ENCODE measurements at regions of chr2 and their contacts with region 1.

Region 1: DNA sequence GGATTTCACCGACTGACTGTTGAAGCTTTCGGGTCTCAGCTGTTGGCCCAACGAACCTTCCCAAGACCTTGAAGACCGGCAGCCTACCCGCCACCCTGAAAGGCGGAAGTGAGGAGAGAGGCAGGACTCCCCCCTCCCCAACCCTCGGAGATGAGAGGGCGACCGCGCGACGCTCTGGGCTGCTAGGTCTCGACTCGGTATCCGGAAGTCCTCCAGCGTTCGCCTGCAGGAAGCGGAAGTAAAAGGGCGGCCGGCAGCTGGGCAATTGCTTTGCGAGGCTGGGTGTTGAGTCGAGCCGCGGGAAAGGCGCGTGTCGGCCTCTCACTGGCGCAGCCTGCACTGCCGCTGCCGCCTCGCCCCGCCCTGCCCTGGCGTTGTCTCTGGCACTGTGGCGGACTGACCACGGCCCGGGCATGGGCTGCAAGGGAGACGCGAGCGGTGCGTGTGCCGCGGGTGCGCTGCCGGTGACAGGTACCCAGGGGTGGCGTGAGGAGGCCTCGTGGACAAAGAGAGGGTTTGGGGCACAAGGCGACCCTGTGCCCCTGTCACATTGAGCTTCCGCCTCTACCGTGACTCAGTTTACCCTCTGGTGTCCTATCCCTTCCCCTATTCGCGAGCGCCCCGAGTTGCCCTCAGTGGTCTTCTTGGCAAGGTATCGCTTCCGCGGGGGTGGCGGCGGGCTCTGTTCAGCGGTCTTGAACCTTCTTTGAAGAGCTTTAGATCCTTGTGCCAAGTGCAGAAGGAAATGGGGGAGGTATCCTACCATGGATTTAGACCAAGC is at the start of gene UGGT1:
- DNase-seq: peak; percentile 96 to 97
- H3K4me3 ChIP-seq: peak within 1 kb of the TSS; percentile 64
- H3K4me3 Mint-ChIP-seq: peak within 1 kb of the TSS; percentile 84
- H3K27ac Mint-ChIP-seq: peak within 1 kb of the TSS; percentile 91
- H3K4me1 ChIP-seq: no peaks in the 10 kb centered on the region
- H3K4me1 Mint-ChIP-seq: no peaks in the 10 kb centered on the region
- H3K27me3 ChIP-seq: no peaks in the 10 kb centered on the region
- H3K27me3 Mint-ChIP-seq: no peaks in the 10 kb centered on the region
- CTCF ChIP-seq: no peak
- total RNA-seq, gene UGGT1: 77.5 and 80.0 TPM in 2 replicates

Region 2: GRCh38 chr2:127844973-127845372 is 246.2 kb before region 1 on chr2:
- CTCF ChIA-PET with region 1: no interaction called
- POLR2A ChIA-PET with region 1: no interaction called
- intact Hi-C with region 1: no loop called
- DNase-seq: no peak
- H3K4me3 ChIP-seq: no peak overlapping the region
- H3K4me3 Mint-ChIP-seq: no peak overlapping the region
- H3K27ac Mint-ChIP-seq: no peak overlapping the region
- H3K4me1 ChIP-seq: no peaks in the 10 kb centered on the region
- H3K4me1 Mint-ChIP-seq: no peaks in the 10 kb centered on the region
- H3K27me3 ChIP-seq: no peaks in the 10 kb centered on the region
- H3K27me3 Mint-ChIP-seq: no peaks in the 10 kb centered on the region
- CTCF ChIP-seq: no peak

Region 3: DNA sequence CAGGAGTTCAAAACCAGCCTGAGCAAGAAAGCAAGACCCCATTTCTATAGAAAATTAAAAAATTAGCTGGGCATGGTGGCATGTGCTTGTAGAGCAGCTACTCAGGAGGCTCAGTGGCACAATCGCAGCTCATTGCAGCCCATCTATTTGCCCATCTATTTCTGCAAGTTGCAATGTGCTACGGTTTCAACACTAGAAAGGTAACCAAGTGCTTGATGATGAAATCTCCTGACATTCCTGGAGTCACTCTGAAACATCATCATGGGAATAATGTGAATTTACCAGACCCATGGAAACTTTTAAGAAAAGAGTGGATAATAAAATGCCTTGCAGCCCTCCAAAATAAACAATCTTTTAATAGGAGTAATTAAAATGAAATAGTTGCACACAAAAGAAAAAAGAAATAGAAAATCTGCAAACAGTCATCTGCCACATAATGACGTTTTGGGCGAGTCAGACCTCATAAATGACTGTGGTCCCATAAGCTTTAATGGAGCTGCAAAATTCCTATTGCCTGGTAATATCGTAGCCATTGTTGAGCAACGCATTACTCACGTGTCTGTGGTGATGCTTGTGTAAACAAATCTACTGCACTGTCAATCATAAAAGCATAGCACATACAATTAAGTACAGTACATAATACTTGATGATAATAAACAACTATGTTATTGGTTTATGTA is 158.8 kb before region 1 on chr2:
- CTCF ChIA-PET with region 1: no interaction called
- POLR2A ChIA-PET with region 1: no interaction called
- intact Hi-C with region 1: no loop called
- DNase-seq: peak in 1 of 2 experiments; percentile 47
- H3K4me3 ChIP-seq: no peak overlapping the region
- H3K4me3 Mint-ChIP-seq: no peak overlapping the region
- H3K27ac Mint-ChIP-seq: no peak overlapping the region
- H3K4me1 ChIP-seq: peaks cover 4% of the 10 kb centered on the region; the same call in 1 of the 2 replicates
- H3K4me1 Mint-ChIP-seq: peaks cover 6% of the 10 kb centered on the region
- H3K27me3 ChIP-seq: no peaks in the 10 kb centered on the region
- H3K27me3 Mint-ChIP-seq: no peaks in the 10 kb centered on the region
- CTCF ChIP-seq: no peak

Region 4: DNA sequence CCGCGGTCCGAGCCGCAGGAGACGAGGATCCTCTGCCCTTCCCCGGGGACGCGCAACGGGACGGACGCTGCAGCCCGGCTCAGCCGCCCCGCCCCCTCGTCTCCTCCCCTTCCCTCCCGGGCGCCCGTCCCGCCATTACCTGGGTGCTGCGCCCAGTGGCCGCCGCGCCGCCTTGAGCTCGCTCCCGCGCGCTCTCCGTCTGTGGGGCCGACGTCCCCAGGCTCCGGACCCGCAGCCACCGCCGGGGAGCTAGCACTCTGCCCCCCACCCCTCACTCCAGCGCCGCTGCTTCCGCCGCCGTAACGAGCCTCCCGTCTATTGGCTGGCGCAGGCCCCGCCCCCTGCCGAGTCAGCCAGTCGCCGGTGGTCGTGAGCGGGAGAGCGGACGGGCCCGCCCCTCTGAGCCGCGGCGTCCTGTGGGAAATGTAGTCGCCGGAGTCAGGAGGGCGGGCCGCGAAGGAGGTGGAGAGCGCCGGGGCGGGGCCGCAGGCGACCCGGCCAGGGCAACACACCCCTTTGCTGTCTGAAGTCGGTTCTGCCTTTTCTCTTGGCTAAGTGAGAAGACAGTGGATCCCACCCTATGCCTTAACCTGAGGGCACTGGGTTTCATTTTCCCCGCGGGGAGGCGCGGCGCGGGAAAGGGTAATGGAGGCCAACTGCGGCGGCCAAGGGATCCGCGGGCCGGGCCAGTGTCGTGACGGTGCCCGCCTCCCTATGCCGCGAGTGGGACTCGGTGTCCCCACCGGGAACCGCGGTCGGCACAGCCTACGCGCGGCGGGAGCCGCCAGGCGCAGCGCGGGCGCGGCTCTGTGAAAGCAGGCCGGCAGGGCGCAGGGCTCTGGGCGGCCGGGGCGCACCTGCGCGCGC is 63.1 kb before region 1 on chr2 and contains the start of gene SAP130:
- CTCF ChIA-PET with region 1: no interaction called
- POLR2A ChIA-PET with region 1: interaction called, 3 read pairs
- intact Hi-C with region 1: loop called (anchors 1 kb)
- DNase-seq: peak; percentile 98 to 99
- H3K4me3 ChIP-seq: peak within 1 kb of the TSS; percentile 97
- H3K4me3 Mint-ChIP-seq: peak within 1 kb of the TSS; percentile 75
- H3K27ac Mint-ChIP-seq: peak within 1 kb of the TSS; percentile 80
- H3K4me1 ChIP-seq: peaks cover 5% of the 10 kb centered on the region; the same call in 1 of the 2 replicates
- H3K4me1 Mint-ChIP-seq: peaks cover 8% of the 10 kb centered on the region
- H3K27me3 ChIP-seq: no peaks in the 10 kb centered on the region
- H3K27me3 Mint-ChIP-seq: no peaks in the 10 kb centered on the region
- CTCF ChIP-seq: no peak
- total RNA-seq, gene SAP130: 41.0 and 43.3 TPM in 2 replicates

Region 5: GRCh38 chr2:128062571-128062970 is 28.6 kb before region 1 on chr2:
- CTCF ChIA-PET with region 1: interaction called, 11 read pairs
- POLR2A ChIA-PET with region 1: interaction called, 3 read pairs
- intact Hi-C with region 1: loop called (anchors 2 kb)
- DNase-seq: no peak
- H3K4me3 ChIP-seq: no peak overlapping the region
- H3K4me3 Mint-ChIP-seq: no peak overlapping the region
- H3K27ac Mint-ChIP-seq: no peak overlapping the region
- H3K4me1 ChIP-seq: peaks cover 4% of the 10 kb centered on the region
- H3K4me1 Mint-ChIP-seq: peaks cover 9% of the 10 kb centered on the region
- H3K27me3 ChIP-seq: no peaks in the 10 kb centered on the region
- H3K27me3 Mint-ChIP-seq: no peaks in the 10 kb centered on the region
- CTCF ChIP-seq: no peak

Measured in Caco-2 (cell line).